HEK293 (cell line): ENCODE measurements at regions of chr15 and their contacts with region 1.

Region 1: GRCh38 chr15:40217159-40217824 is 21.6 kb upstream of the PAK6 start:
- H3K4me3 ChIP-seq: no peak overlapping the region
- H3K27ac ChIP-seq: no peak overlapping the region
- H3K4me1 ChIP-seq: no peaks in the 10 kb centered on the region
- CTCF ChIP-seq: no peak

Region 2: DNA sequence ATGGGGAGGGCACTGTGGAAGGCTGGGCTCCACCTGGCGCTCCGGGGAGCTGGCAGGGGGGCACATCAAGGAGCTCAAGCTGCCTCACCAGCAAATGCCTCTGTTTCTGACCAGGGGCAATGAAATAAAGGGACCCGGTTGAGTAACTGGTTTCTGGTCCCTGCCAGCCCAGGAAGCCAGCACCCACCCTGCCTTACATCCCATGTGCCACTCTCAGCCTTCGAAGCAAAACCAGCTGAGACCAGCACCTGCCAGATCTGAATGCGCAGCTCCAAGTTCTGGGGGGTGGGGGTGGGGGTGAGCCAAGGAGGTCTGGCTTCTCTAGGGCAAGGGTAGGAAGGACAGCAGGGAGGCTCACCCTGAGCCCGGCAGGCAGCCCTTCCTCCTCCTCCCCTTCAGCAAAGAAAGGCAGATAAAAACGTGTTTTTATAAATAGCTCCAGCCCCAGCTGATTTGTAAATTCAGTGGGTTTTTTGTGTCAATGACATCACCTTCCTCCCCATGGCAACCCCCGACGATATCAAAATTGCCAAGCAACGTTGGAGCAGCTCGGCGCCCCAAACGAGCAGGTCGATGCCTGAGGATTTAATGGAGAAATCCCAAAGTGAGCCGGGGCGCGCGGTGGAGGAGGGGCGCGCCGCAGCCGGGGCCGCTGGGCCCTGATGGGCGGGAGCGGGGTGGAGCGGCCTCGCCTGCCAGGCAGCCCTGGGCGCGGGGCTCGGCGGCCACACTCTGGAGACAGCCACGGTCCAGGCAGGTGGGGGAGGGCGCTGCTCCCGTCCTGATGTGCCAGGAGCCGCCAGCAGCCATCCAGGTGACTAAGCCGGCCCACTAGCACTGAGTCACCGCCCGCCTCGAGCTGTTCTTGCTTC is 21.5 kb after region 1 on chr15 and contains the start of gene PAK6:
- CTCF ChIA-PET with region 1: interaction called, 13 read pairs
- POLR2A ChIA-PET with region 1: no interaction called
- H3K4me3 ChIP-seq: peak within 1 kb of the TSS; percentile 26
- H3K27ac ChIP-seq: no peak within 1 kb of the TSS; the same call in 1 of the 2 replicates
- H3K4me1 ChIP-seq: peaks cover 5% of the 10 kb centered on the region; the same call in 1 of the 2 replicates
- CTCF ChIP-seq: no peak

Region 3: GRCh38 chr15:40263024-40263754 is 45.9 kb after region 1 on chr15:
- CTCF ChIA-PET with region 1: interaction called, 210 read pairs
- POLR2A ChIA-PET with region 1: no interaction called
- H3K4me3 ChIP-seq: no peak overlapping the region
- H3K27ac ChIP-seq: peak overlapping the region; percentile 34; the same call in 1 of the 2 replicates
- H3K4me1 ChIP-seq: peaks cover 22% of the 10 kb centered on the region
- CTCF ChIP-seq: no peak